Activated CD4-positive, alpha-beta T cell treated with anti-CD3 and anti-CD28 coated beads for 36 hours (primary cell): ENCODE measurements at regions of chr9 and their contacts with region 1.

Region 1: GRCh38 chr9:89418882-89419640 is 78.9 kb downstream of the SEMA4D start:
- DNase-seq: peak; percentile 85
- ATAC-seq: peak; percentile 22
- H3K4me3 Mint-ChIP-seq: peak overlapping the region; percentile 74
- H3K27ac Mint-ChIP-seq: peak overlapping the region; percentile 88
- H3K4me1 Mint-ChIP-seq: peaks cover 93% of the 10 kb centered on the region
- H3K27me3 Mint-ChIP-seq: no peaks in the 10 kb centered on the region

Region 2: GRCh38 chr9:89154651-89155336 is 264.3 kb before region 1 on chr9:
- CTCF ChIA-PET with region 1: no interaction called
- POLR2A ChIA-PET with region 1: no interaction called
- intact Hi-C with region 1: loop called in 1 of 2 experiments (anchors 5 kb)
- DNase-seq: peak; percentile 63
- ATAC-seq: peak; percentile 81
- H3K4me3 Mint-ChIP-seq: no peak overlapping the region
- H3K27ac Mint-ChIP-seq: no peak overlapping the region
- H3K4me1 Mint-ChIP-seq: peaks cover 24% of the 10 kb centered on the region
- H3K27me3 Mint-ChIP-seq: peaks cover 41% of the 10 kb centered on the region

Region 3: GRCh38 chr9:89442981-89443814 is 24.1 kb after region 1 on chr9:
- CTCF ChIA-PET with region 1: interaction called, 5 read pairs
- POLR2A ChIA-PET with region 1: interaction called, 3 read pairs
- intact Hi-C with region 1: loop called in 1 of 2 experiments (anchors 2 kb)
- DNase-seq: no peak
- ATAC-seq: peak; percentile 7
- H3K4me3 Mint-ChIP-seq: no peak overlapping the region
- H3K27ac Mint-ChIP-seq: peak overlapping the region; percentile 94
- H3K4me1 Mint-ChIP-seq: peaks cover 93% of the 10 kb centered on the region
- H3K27me3 Mint-ChIP-seq: no peaks in the 10 kb centered on the region

Region 4: GRCh38 chr9:89477811-89478630 is 59.0 kb after region 1 on chr9:
- CTCF ChIA-PET with region 1: interaction called, 4 read pairs
- POLR2A ChIA-PET with region 1: interaction called, 3 read pairs
- intact Hi-C with region 1: loop called in 1 of 2 experiments (anchors 1 kb)
- DNase-seq: peak; percentile 79
- ATAC-seq: peak; percentile 43
- H3K4me3 Mint-ChIP-seq: peak overlapping the region; percentile 92
- H3K27ac Mint-ChIP-seq: peak overlapping the region; percentile 99
- H3K4me1 Mint-ChIP-seq: peaks cover 94% of the 10 kb centered on the region
- H3K27me3 Mint-ChIP-seq: no peaks in the 10 kb centered on the region

Region 5: DNA sequence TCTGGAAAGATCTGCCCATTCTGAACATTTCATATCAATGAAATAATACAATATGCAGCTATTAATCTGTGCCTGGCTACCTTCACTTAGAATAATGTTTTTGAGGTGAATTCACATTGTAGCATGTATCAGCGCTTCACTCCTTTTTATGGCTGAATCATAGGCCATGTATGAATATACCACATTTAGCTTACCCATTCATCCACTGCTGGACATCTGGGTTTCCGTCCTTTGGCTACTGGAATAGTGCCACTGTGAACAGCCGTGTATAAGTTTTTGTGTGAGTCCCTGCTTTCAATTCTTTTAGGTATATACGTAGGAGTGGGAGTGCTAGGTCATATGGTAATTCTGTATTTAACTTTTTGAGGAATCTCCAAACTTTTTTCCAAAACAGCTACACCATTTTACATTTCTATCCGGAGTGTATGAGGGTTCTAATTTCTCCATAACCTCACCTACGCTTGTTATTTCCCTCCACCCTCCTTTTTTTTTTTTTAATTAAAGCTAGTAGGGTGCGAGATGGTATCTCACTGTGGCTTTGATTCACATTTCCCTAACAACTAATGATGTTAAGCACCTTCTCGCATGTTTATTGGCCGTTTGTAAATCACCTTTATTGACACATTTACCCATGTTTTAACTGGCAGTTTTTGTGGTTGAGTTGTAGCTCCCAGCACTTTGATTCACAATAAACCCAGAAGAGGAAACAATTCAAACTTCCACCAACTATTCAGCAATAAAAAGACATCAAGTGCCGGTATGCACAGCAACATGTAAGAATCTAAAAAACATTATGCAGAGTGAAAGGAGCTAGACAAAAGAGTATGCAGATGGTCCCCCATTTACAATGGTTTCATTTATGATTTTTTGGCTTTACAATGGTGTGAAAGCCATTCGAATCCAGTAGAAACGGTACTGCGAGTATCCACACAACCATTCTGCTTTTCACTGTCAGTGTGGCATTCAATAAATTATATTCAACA is 70.8 kb after region 1 on chr9:
- CTCF ChIA-PET with region 1: interaction called, 5 read pairs
- POLR2A ChIA-PET with region 1: no interaction called
- intact Hi-C with region 1: loop called (anchors 1 to 2 kb)
- DNase-seq: no peak
- ATAC-seq: peak; percentile 45
- H3K4me3 Mint-ChIP-seq: peak overlapping the region; percentile 51
- H3K27ac Mint-ChIP-seq: peak overlapping the region; percentile 87
- H3K4me1 Mint-ChIP-seq: peaks cover 95% of the 10 kb centered on the region
- H3K27me3 Mint-ChIP-seq: no peaks in the 10 kb centered on the region

Region 6: GRCh38 chr9:89536145-89536574 is 117.1 kb after region 1 on chr9:
- CTCF ChIA-PET with region 1: no interaction called
- POLR2A ChIA-PET with region 1: no interaction called
- intact Hi-C with region 1: loop called in 1 of 2 experiments (anchors 2 kb)
- DNase-seq: no peak
- ATAC-seq: peak; percentile 68
- H3K4me3 Mint-ChIP-seq: peak overlapping the region; percentile 57
- H3K27ac Mint-ChIP-seq: peak overlapping the region; percentile 97
- H3K4me1 Mint-ChIP-seq: peaks cover 88% of the 10 kb centered on the region
- H3K27me3 Mint-ChIP-seq: no peaks in the 10 kb centered on the region